Dendritic cell treated with granulocyte-macrophage colony-stimulating factor and Interleukin-4, amounts not matched to agents 40 ng/mL and 50 ng/mL, for 4 days (primary cell): ENCODE measurements at regions of chr11 and their contacts with region 1.

Region 1: GRCh38 chr11:4493480-4493818 is 11.0 kb downstream of the OR52K1 start:
- H3K4me3 Mint-ChIP-seq: no peak overlapping the region
- H3K27ac Mint-ChIP-seq: no peak overlapping the region
- H3K4me1 Mint-ChIP-seq: peaks cover 12% of the 10 kb centered on the region
- H3K27me3 Mint-ChIP-seq: peaks cover 11% of the 10 kb centered on the region

Region 2: GRCh38 chr11:4393209-4393857 is 100.1 kb before region 1 on chr11 and contains the start of gene TRIM21:
- intact Hi-C with region 1: loop called (anchors 5 kb)
- H3K4me3 Mint-ChIP-seq: peak within 1 kb of the TSS; percentile 91
- H3K27ac Mint-ChIP-seq: peak within 1 kb of the TSS; percentile 95
- H3K4me1 Mint-ChIP-seq: peaks cover 49% of the 10 kb centered on the region
- H3K27me3 Mint-ChIP-seq: no peaks in the 10 kb centered on the region

Region 3: DNA sequence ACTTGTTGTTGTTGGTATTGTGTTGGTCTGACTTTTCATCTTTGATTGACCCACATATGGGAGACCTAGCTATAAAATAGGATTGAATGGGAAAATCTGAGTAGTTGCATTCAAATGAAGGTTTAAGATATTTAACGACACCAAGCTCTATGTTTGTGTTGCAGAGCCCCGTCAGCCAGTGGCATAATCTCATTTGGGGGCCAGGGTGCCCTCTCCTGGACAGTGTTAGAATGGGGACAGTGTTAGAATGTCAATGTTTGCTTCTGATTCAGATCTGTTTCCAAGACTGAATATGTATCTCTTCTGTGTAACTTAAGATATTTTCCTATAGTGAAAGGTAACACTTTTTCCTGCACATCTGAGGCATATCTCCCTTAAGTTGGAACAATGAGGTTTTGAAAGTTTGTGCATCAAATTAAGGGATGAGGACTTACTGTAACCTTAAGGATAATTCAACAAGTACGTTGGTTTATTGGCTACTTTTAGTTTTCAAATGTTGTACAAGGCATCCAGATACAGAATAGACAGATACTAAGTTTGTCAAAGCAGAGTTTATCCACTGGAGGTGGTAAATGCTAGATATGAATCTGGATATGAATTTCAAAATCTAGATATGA is 46.3 kb after region 1 on chr11:
- intact Hi-C with region 1: loop called (anchors 2 kb)
- H3K4me3 Mint-ChIP-seq: no peak overlapping the region
- H3K27ac Mint-ChIP-seq: no peak overlapping the region
- H3K4me1 Mint-ChIP-seq: no peaks in the 10 kb centered on the region
- H3K27me3 Mint-ChIP-seq: peaks cover 15% of the 10 kb centered on the region

Region 4: GRCh38 chr11:4551346-4551979 is 58.0 kb after region 1 on chr11:
- intact Hi-C with region 1: no loop called
- H3K4me3 Mint-ChIP-seq: no peak overlapping the region
- H3K27ac Mint-ChIP-seq: no peak overlapping the region
- H3K4me1 Mint-ChIP-seq: no peaks in the 10 kb centered on the region
- H3K27me3 Mint-ChIP-seq: peaks cover 3% of the 10 kb centered on the region